Activated CD8-positive, alpha-beta memory T cell treated with anti-CD3 and anti-CD28 coated beads, Interleukin-2, amount 10 ng/mL, durations not matched to agents 7 days and 5 days (primary cell): ENCODE measurements at regions of chr15 and their contacts with region 1.

Region 1: DNA sequence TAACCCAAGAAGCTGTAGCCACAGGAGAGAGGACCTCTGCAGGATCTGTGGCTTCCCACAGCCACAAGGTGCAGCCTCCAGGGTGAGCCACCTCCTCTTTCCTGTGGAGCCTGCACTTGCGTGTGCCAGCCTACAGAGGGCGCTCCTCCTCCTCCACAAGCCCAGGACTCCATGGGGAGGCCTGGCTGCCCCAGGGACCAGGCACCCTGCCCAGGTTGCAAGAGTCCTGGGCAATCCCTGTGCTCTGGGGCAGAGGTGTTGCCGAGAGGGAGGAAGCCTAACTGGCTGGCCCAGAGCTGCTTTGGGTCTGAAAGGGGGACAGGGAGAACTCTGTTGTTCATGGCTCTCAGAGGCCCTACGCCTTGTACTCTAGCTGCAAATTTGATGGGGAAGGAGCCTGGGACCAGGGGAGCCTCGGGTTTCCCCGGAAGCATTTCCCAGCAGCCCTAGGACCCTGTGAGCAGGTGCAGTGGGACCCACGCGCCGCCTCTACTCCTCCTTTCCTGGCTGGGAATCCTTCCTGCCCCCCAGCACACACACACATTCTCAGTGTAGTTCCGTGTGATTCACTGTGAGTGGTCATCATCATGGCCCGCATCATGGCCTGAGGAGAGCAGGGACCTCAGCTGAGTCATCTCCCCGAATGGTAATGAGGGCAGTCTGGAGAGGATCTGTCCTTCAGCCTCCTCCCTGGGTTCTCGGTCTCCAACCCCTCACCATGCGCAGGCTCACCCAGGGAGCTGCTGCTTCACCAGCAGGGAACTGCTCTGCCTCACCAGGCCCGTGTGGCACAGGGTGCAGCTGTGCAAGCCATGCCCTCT is 24.3 kb downstream of the TBC1D21 start:
- DNase-seq: peak; percentile 90
- ATAC-seq: peak; percentile 94
- H3K4me3 Mint-ChIP-seq: no peak overlapping the region
- H3K27ac Mint-ChIP-seq: no peak overlapping the region
- H3K4me1 Mint-ChIP-seq: peaks cover 15% of the 10 kb centered on the region
- H3K27me3 Mint-ChIP-seq: peaks cover 10% of the 10 kb centered on the region

Region 2: DNA sequence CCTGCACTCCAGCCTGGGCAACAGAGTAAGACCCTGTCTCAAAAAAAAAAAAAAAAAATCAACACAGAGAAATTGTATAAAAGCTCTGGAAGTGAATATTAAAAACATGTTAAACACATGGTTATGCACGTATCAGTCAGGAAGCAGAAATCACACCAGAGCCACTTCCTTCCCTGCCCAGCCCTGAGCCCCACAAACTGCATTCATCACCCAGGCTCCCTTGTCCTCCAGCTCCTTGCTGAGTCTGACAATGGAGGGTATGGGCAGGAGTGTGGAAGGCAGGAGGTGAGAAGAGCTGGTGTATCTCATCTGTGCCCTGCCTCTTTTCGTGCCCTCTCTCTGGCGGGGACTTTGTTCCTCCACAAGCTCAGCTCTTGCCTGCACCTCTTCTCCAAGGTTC is 16.5 kb after region 1 on chr15:
- CTCF ChIA-PET with region 1: interaction called, 78 read pairs
- DNase-seq: peak; percentile 69
- ATAC-seq: peak; percentile 94
- H3K4me3 Mint-ChIP-seq: no peak overlapping the region
- H3K27ac Mint-ChIP-seq: peak overlapping the region; percentile 72
- H3K4me1 Mint-ChIP-seq: peaks cover 33% of the 10 kb centered on the region
- H3K27me3 Mint-ChIP-seq: no peaks in the 10 kb centered on the region